Caco-2 (cell line): ENCODE measurements at regions of chr3 and their contacts with region 1.

Region 1: GRCh38 chr3:852033-852432 is 240.8 kb upstream of the CNTN6 start:
- DNase-seq: no peak
- H3K4me3 ChIP-seq: no peak overlapping the region
- H3K4me3 Mint-ChIP-seq: no peak overlapping the region
- H3K27ac Mint-ChIP-seq: no peak overlapping the region
- H3K4me1 ChIP-seq: no peaks in the 10 kb centered on the region
- H3K4me1 Mint-ChIP-seq: no peaks in the 10 kb centered on the region
- H3K27me3 ChIP-seq: no peaks in the 10 kb centered on the region
- H3K27me3 Mint-ChIP-seq: peaks cover 7% of the 10 kb centered on the region
- CTCF ChIP-seq: no peak

Region 2: GRCh38 chr3:632572-633170 is 219.4 kb before region 1 on chr3:
- CTCF ChIA-PET with region 1: no interaction called
- POLR2A ChIA-PET with region 1: no interaction called
- intact Hi-C with region 1: loop called (anchors 1 kb)
- DNase-seq: peak; percentile 60 to 65
- H3K4me3 ChIP-seq: no peak overlapping the region
- H3K4me3 Mint-ChIP-seq: no peak overlapping the region
- H3K27ac Mint-ChIP-seq: no peak overlapping the region
- H3K4me1 ChIP-seq: no peaks in the 10 kb centered on the region
- H3K4me1 Mint-ChIP-seq: no peaks in the 10 kb centered on the region
- H3K27me3 ChIP-seq: no peaks in the 10 kb centered on the region
- H3K27me3 Mint-ChIP-seq: peaks cover 4% of the 10 kb centered on the region
- CTCF ChIP-seq: peak; percentile 55 to 69

Region 3: DNA sequence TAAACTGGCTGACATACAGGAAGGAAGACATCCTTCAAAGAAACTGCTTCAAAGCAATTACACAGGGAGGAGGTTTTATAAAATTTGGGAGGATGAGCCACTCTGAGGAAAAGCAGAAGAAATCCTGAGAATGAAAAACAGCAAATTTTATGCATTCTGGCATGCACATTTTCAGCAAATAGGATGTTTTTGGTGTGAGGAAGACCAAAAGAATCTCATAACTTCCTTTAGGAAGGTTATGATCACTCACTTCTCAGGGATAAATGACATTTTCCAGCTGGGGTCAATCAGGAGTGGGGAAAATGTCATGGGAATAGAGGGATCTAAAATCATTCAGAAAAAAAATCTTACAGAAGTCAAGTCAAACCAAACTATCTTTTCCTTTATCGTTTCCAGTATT is 130.9 kb before region 1 on chr3:
- CTCF ChIA-PET with region 1: no interaction called
- POLR2A ChIA-PET with region 1: no interaction called
- intact Hi-C with region 1: no loop called
- DNase-seq: no peak
- H3K4me3 ChIP-seq: no peak overlapping the region
- H3K4me3 Mint-ChIP-seq: no peak overlapping the region
- H3K27ac Mint-ChIP-seq: no peak overlapping the region
- H3K4me1 ChIP-seq: no peaks in the 10 kb centered on the region
- H3K4me1 Mint-ChIP-seq: no peaks in the 10 kb centered on the region
- H3K27me3 ChIP-seq: no peaks in the 10 kb centered on the region
- H3K27me3 Mint-ChIP-seq: peaks cover 2% of the 10 kb centered on the region
- CTCF ChIP-seq: no peak

Region 4: GRCh38 chr3:792630-793029 is 59.4 kb before region 1 on chr3:
- CTCF ChIA-PET with region 1: no interaction called
- POLR2A ChIA-PET with region 1: no interaction called
- intact Hi-C with region 1: no loop called
- DNase-seq: no peak
- H3K4me3 ChIP-seq: no peak overlapping the region
- H3K4me3 Mint-ChIP-seq: no peak overlapping the region
- H3K27ac Mint-ChIP-seq: no peak overlapping the region
- H3K4me1 ChIP-seq: no peaks in the 10 kb centered on the region
- H3K4me1 Mint-ChIP-seq: no peaks in the 10 kb centered on the region
- H3K27me3 ChIP-seq: no peaks in the 10 kb centered on the region
- H3K27me3 Mint-ChIP-seq: no peaks in the 10 kb centered on the region
- CTCF ChIP-seq: no peak

Region 5: DNA sequence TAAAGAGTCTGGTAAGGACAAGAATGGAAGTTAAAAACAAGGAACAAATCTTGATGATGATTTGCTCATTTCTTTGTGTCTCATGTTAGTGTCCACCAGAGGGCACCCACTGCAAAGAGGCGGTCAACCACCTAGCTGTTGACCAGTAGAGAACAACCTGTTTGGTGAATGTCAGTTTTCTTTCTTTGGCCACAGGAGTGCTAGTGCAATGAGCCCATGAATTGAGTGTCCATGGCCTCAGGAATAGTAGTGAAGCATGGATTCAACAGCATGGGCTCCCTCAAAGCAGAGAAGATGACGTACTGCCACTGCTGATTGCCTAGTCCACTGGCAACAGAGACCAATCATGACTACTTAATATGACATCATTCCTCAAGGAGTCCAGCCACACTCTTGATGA is 230.1 kb after region 1 on chr3:
- CTCF ChIA-PET with region 1: no interaction called
- POLR2A ChIA-PET with region 1: no interaction called
- intact Hi-C with region 1: no loop called
- DNase-seq: peak; percentile 44 to 60
- H3K4me3 ChIP-seq: no peak overlapping the region
- H3K4me3 Mint-ChIP-seq: no peak overlapping the region
- H3K27ac Mint-ChIP-seq: no peak overlapping the region
- H3K4me1 ChIP-seq: no peaks in the 10 kb centered on the region
- H3K4me1 Mint-ChIP-seq: no peaks in the 10 kb centered on the region
- H3K27me3 ChIP-seq: no peaks in the 10 kb centered on the region
- H3K27me3 Mint-ChIP-seq: no peaks in the 10 kb centered on the region
- CTCF ChIP-seq: peak; percentile 61 to 73

Region 6: DNA sequence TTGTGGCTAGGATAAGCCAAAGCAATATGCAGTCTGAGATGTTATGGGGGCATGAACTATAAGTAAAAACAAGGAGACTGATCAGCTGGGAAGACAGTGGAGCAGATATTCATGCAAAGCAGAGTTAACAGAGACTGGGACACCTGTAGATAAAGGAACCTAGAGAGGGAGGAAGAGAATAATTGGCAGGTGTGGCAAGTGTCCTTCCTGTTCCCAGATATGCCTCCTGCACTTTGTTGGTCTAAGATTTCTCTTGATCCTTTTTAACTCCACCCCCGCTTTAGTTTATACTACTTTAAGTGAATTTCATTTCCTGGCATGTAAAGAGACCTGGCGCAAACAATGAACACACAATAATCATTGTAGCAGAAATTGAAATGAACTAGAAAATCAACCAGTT is 410.2 kb after region 1 on chr3:
- CTCF ChIA-PET with region 1: no interaction called
- POLR2A ChIA-PET with region 1: no interaction called
- intact Hi-C with region 1: no loop called
- DNase-seq: no peak
- H3K4me3 ChIP-seq: no peak overlapping the region
- H3K4me3 Mint-ChIP-seq: no peak overlapping the region
- H3K27ac Mint-ChIP-seq: no peak overlapping the region
- H3K4me1 ChIP-seq: no peaks in the 10 kb centered on the region
- H3K4me1 Mint-ChIP-seq: no peaks in the 10 kb centered on the region
- H3K27me3 ChIP-seq: no peaks in the 10 kb centered on the region
- H3K27me3 Mint-ChIP-seq: peaks cover 6% of the 10 kb centered on the region
- CTCF ChIP-seq: no peak